ENCODE measurements at regions of chr4 and their contacts with region 1.

Region 1: GRCh38 chr4:16692961-16693506 is 205.4 kb downstream of the LDB2 start:
- DNase-seq: no peak
- H3K4me3 ChIP-seq: no peak overlapping the region
- H3K27ac ChIP-seq: peak overlapping the region; percentile 78
- H3K4me1 ChIP-seq: peaks cover 53% of the 10 kb centered on the region
- H3K27me3 ChIP-seq: no peaks in the 10 kb centered on the region
- CTCF ChIP-seq: no peak

Region 2: DNA sequence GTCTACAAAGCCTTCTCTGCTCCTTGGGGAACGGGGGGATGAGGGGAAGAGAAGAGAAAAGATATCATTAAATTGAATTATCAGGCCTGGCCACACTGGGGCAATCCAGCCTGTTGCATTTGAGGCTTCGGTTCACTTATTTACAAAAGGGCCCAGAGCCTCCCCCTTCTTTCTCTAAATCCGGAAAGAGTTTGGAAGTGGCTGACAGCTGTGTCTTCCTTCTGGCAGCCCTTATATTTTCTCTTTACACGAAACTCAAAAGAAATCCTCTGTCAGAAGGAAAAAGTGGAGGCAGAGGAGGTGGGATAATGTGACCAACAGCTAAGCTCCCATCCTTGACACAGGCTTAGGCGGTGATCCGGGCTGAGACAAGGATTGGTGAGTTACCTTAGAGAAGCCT is 308.5 kb before region 1 on chr4:
- CTCF ChIA-PET with region 1: no interaction called
- POLR2A ChIA-PET with region 1: no interaction called
- intact Hi-C with region 1: loop called (anchors 2 kb)
- DNase-seq: peak; percentile 84
- H3K4me3 ChIP-seq: no peak overlapping the region
- H3K27ac ChIP-seq: peak overlapping the region; percentile 92
- H3K4me1 ChIP-seq: peaks cover 54% of the 10 kb centered on the region
- H3K27me3 ChIP-seq: no peaks in the 10 kb centered on the region
- CTCF ChIP-seq: no peak

Region 3: DNA sequence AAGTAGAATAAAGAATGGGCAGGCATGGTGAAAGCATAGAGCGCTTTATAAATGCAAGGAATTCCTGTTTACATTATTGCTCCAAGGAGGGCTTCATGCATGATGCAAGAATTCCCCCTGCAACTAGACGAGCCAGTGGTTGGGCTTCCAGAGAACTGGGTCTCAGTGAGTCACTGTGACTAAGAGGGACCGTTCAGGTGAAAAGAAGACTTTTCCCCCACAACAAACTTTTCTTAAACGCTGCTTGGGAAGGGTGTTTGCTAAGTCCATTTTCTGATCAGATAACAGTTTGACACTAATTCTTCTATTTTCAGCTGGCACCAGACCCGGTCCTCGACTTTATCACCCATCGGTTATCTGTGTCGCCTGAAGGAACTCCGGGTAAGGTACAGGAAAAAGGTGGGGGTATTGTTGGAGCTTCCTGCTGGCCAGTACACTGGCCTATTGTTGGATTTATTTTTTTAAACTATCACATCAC is 165.3 kb after region 1 on chr4:
- CTCF ChIA-PET with region 1: no interaction called
- POLR2A ChIA-PET with region 1: no interaction called
- intact Hi-C with region 1: no loop called
- DNase-seq: no peak
- H3K4me3 ChIP-seq: no peak overlapping the region
- H3K27ac ChIP-seq: no peak overlapping the region
- H3K4me1 ChIP-seq: peaks cover 21% of the 10 kb centered on the region
- H3K27me3 ChIP-seq: no peaks in the 10 kb centered on the region
- CTCF ChIP-seq: no peak

Region 4: DNA sequence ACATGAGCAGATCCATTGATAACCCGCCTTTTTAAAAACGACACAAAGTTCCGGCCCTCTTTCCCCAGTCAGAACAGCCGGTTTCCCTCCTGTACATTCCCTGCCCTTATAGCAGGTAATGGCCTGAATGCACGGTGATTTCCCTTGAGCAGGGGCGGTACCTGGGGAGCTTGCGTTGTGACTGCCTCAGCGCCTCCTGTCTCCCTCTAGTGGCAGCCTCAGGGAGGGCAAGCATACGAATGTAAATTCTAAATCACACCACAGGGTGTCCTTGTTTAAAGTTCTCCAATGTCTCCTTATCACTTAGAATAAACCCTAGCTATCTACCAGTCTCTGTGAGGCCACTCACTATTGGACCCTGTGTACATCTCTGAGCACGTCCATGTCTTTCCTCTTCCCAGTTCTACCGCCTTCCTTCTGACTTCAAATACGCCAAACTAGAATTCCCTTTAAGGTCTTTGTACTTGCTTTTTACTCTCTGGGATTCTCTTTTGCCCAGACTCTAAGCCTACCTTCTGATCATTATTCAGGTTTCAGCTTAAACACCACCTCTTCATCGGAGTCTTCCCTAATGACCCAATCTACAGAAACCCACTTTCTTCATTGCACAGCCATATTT is 223.8 kb after region 1 on chr4:
- CTCF ChIA-PET with region 1: no interaction called
- POLR2A ChIA-PET with region 1: no interaction called
- intact Hi-C with region 1: no loop called
- DNase-seq: peak; percentile 82
- H3K4me3 ChIP-seq: no peak overlapping the region
- H3K27ac ChIP-seq: no peak overlapping the region
- H3K4me1 ChIP-seq: no peaks in the 10 kb centered on the region
- H3K27me3 ChIP-seq: no peaks in the 10 kb centered on the region
- CTCF ChIP-seq: peak; percentile 97

Measured in A673 (cell line).